CD14-positive monocyte (primary cell): ENCODE measurements at regions of chr21 and their contacts with region 1.

Region 1: DNA sequence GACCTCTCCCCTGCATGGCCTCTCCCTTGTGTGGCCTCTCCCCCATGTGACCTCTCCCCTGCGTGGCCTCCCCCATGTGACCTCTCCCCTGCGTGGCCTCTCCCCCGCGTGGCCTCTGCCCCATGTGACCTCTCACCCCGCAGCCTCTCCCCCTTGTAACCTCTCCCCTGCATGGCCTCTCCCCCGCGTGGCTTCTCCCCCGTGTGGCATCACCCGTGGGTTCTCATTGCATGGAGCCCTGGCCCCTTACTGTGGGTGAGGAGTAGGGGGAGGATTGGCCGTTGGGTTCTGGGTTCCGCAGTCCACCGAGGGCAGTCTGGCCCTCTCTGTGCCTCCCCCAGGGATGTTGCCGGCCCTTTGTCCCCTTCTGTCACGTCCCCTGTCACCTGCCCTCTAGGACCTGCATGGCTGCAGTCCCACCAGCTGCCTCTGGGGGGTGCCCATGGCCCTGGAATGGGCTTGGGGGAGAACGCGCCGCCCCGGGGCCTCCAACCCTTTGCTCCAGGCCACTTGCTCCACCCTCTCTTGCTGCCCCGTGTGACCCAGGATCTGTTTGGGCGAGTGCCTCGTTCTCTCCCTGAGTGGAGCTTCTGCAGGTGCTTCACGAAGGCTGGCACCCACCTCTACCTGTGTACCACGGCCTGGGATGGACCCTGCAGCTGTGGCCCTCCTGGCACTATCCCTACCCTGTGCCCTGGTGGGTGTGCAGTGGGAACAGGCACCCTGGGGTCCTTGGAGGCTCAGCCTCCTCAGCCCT is 21.3 kb downstream of the RRP1 start:
- DNase-seq: peak; percentile 78 to 85 (median 82)
- H3K4me3 ChIP-seq: peak overlapping the region; percentile 63 to 89 (median 77)
- H3K4me3 Mint-ChIP-seq: peak overlapping the region; percentile 96 to 97
- H3K27ac ChIP-seq: peak overlapping the region; percentile 68 to 78
- H3K27ac Mint-ChIP-seq: peak overlapping the region in 6 of 7 donors; percentile 37 to 95 (median 88)
- H3K4me1 ChIP-seq: peaks cover 71 to 91% of the 10 kb centered on the region in 2 donors
- H3K4me1 Mint-ChIP-seq: peaks cover 72% of the 10 kb centered on the region
- H3K27me3 ChIP-seq: no peaks in the 10 kb centered on the region
- H3K27me3 Mint-ChIP-seq: peaks cover 0 to under 1% (median 0%) of the 10 kb centered on the region in 3 donors
- CTCF ChIP-seq: peak; percentile 90

Region 2: DNA sequence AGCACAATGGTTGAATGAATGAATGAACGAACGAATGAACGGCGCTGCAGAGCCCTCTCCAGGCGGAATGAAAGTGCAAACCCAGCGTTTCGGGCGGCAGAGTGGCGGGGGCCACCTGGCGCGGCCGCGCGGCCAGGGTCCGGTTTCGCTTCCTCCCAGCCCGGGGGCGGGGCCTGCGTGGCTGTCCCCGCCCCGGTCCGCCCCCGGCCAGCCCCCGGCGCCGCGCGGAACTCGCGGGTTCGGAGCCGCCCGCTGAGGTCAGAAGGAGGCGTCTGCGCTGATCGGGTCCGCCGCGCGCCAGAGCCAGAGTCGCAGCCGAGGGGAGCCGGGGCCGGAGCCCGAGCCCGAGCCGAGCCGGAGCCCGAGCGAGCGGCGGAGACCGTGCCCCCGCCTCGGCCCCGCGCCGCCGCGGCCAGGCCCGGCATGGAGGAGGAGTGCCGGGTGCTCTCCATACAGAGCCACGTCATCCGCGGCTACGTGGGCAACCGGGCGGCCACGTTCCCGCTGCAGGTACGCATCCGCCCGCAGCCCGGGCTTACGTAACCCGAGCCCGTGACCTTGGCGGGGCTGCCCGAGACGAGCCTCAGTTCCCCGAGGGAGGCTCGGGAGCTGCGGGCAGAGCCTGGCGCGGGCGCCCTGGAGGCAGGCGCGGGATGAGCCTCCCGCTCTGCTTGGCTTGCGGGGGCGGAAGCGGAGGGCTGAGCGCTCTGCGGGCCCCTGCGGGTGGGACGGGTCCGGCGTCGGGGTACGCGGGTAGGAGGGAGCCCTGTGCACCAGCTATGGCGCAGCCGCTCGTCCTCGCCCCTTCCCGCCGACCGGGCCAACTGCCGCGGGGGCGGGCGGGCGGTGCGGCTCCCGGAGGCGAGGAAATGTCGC is 91.6 kb before region 1 on chr21 and contains the start of gene PDXK:
- intact Hi-C with region 1: no loop called
- DNase-seq: peak; percentile 77 to 86 (median 83)
- H3K4me3 ChIP-seq: peak within 1 kb of the TSS; percentile 87 to 93 (median 90)
- H3K4me3 Mint-ChIP-seq: peak within 1 kb of the TSS; percentile 91 to 96
- H3K27ac ChIP-seq: peak within 1 kb of the TSS; percentile 65 to 92
- H3K27ac Mint-ChIP-seq: peak within 1 kb of the TSS; percentile 85 to 95 (median 90)
- H3K4me1 ChIP-seq: peaks cover 50 to 54% of the 10 kb centered on the region in 2 donors
- H3K4me1 Mint-ChIP-seq: peaks cover 50% of the 10 kb centered on the region
- H3K27me3 ChIP-seq: peaks cover 0 to 11% of the 10 kb centered on the region in 2 donors
- H3K27me3 Mint-ChIP-seq: peaks cover 17 to 34% (median 28%) of the 10 kb centered on the region in 3 donors
- CTCF ChIP-seq: no peak
- polyA plus RNA-seq, gene PDXK: 128 to 214 (median 210) TPM

Region 3: GRCh38 chr21:43864313-43864961 is 53.8 kb after region 1 on chr21:
- intact Hi-C with region 1: loop called (anchors 2 to 5 kb)
- DNase-seq: peak in 2 of 3 donors; percentile 20 to 37
- H3K4me3 ChIP-seq: peak overlapping the region; percentile 11 to 74 (median 44)
- H3K4me3 Mint-ChIP-seq: peak overlapping the region; percentile 30 to 34
- H3K27ac ChIP-seq: peak overlapping the region in 1 of 2 donors; percentile 67
- H3K27ac Mint-ChIP-seq: no peak overlapping the region
- H3K4me1 ChIP-seq: peaks cover 26 to 36% of the 10 kb centered on the region in 2 donors
- H3K4me1 Mint-ChIP-seq: peaks cover 37% of the 10 kb centered on the region
- H3K27me3 ChIP-seq: no peaks in the 10 kb centered on the region
- H3K27me3 Mint-ChIP-seq: peaks cover 5 to 18% (median 9%) of the 10 kb centered on the region in 3 donors
- CTCF ChIP-seq: no peak

Region 4: DNA sequence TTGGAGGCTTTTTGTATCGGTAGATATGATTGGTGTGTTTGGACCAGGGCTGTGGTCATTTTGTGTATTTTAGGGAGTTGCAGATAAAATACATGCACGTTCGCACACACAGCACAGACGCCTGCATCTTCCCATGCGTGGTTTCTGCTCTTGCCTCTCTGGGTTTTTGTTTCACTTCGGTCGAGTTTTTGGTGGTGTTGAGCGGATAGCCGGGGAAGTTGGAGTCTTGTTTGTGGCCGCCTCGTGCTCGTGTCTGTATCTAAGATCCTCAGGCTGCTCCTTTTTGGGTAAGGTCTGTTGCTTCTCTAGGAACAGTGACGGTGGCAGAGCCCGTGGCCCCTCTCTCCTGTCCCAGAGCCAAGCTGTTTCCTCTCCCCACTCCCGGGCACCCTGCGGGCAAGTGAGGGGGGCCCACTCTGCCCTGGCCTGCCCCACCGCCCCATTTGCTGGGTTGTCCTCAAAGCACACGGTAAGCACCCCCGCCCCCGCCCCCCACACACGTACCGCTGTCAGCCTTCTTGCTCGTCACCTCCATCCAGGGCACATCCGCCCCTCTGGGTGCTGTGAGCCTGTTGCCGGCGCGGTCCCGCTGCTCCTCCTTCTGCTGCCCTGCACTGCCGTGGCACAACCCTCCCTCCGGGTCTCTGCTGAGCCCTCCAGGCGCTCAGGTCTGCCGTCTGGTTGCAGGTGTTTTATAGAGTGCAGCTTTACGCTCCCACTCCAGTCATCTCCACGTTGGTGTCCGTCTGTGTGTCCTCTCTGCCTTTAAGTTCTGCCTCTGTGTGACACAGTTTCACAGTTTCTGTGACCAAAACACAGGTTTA is 106.2 kb after region 1 on chr21:
- intact Hi-C with region 1: loop called in 1 of 2 experiments (anchors 2 kb)
- DNase-seq: no peak
- H3K4me3 ChIP-seq: peak overlapping the region in 1 of 3 experiments; percentile 58
- H3K4me3 Mint-ChIP-seq: peak overlapping the region; percentile 65 to 92
- H3K27ac ChIP-seq: no peak overlapping the region
- H3K27ac Mint-ChIP-seq: peak overlapping the region in 4 of 7 donors; percentile 43 to 72 (median 59)
- H3K4me1 ChIP-seq: peaks cover 21 to 29% of the 10 kb centered on the region in 2 donors
- H3K4me1 Mint-ChIP-seq: peaks cover 45% of the 10 kb centered on the region
- H3K27me3 ChIP-seq: no peaks in the 10 kb centered on the region
- H3K27me3 Mint-ChIP-seq: peaks cover 0 to 12% (median 3%) of the 10 kb centered on the region in 3 donors
- CTCF ChIP-seq: no peak

Region 5: DNA sequence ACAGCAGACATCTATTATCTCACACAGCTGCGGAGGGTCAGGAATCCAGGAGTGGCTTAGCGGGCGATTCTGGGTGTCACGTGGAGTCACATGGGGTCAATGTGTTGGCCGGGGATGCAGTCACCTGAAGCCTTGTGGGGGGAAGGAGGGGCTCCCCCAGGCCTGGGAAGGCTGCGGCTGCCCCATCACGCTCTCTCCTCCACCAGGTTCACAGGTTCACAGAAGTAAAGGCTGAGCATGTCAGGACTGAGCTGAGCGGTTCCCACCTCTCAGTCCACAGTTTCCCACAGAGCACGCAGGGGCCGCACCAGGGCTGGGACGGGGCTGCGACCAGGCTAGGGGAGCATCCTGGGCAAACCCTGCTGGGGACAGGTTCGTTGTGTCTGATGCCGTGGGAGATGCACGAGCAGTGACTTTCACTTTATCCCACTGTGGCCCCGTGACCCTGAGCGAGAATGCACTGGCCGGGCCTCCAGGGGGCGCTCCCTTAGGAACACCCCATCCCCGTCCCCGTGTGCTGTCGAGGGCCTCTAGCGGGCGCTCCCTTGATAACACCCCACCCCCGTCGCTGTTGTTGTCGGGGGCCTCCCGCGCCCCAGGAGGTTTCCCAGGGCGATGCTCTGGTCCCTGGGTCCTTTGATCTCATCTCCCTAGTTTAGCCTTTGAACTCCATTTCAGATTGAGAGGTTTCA is 128.2 kb after region 1 on chr21:
- intact Hi-C with region 1: loop called (anchors 5 to 10 kb)
- DNase-seq: peak; percentile 80 to 84 (median 81)
- H3K4me3 ChIP-seq: peak overlapping the region; percentile 16 to 67 (median 23)
- H3K4me3 Mint-ChIP-seq: peak overlapping the region; percentile 83 to 93
- H3K27ac ChIP-seq: peak overlapping the region in 1 of 2 donors; percentile 48
- H3K27ac Mint-ChIP-seq: peak overlapping the region; percentile 47 to 89 (median 81)
- H3K4me1 ChIP-seq: peaks cover 15 to 21% of the 10 kb centered on the region in 2 donors
- H3K4me1 Mint-ChIP-seq: peaks cover 22% of the 10 kb centered on the region
- H3K27me3 ChIP-seq: no peaks in the 10 kb centered on the region
- H3K27me3 Mint-ChIP-seq: peaks cover 0 to 2% (median 0%) of the 10 kb centered on the region in 3 donors
- CTCF ChIP-seq: peak; percentile 100